ENCODE measurements at regions of chr4 and their contacts with region 1.

Region 1: GRCh38 chr4:83217721-83218522 is 66.7 kb downstream of the COQ2 start:
- DNase-seq: peak; percentile 99
- ATAC-seq: peak; percentile 79
- H3K4me3 ChIP-seq: peak overlapping the region; percentile 17; the same call in 1 of the 2 replicates
- H3K27ac ChIP-seq: peak overlapping the region; percentile 97
- H3K4me1 ChIP-seq: peaks cover 70% of the 10 kb centered on the region
- H3K27me3 ChIP-seq: no peaks in the 10 kb centered on the region
- CTCF ChIP-seq: no peak
- EP300 ChIP-seq: peak; percentile 78 to 88; a peak in 2 of 4 replicates
- POLR2A ChIP-seq: peak; percentile 31; the same call in 1 of the 2 replicates
- RAD21 ChIP-seq: peak; percentile 20; the same call in 1 of the 2 replicates

Region 2: GRCh38 chr4:83054928-83055327 is 163.0 kb before region 1 on chr4:
- CTCF ChIA-PET with region 1: no interaction called
- POLR2A ChIA-PET with region 1: no interaction called
- RAD21 ChIA-PET with region 1: no interaction called
- SMC1A ChIA-PET with region 1: no interaction called
- in situ Hi-C with region 1: no loop called
- intact Hi-C with region 1: no loop called
- DNase-seq: no peak
- ATAC-seq: peak; percentile 67
- H3K4me3 ChIP-seq: no peak overlapping the region
- H3K27ac ChIP-seq: no peak overlapping the region
- H3K4me1 ChIP-seq: no peaks in the 10 kb centered on the region
- H3K27me3 ChIP-seq: no peaks in the 10 kb centered on the region
- CTCF ChIP-seq: peak; percentile 19 to 48 (median 38); a peak in 3 of 6 replicates
- EP300 ChIP-seq: no peak
- POLR2A ChIP-seq: no peak
- RAD21 ChIP-seq: peak; percentile 51

Region 3: GRCh38 chr4:83074086-83074704 is 143.7 kb before region 1 on chr4:
- CTCF ChIA-PET with region 1: interaction called, 14 read pairs
- POLR2A ChIA-PET with region 1: interaction called, 5 read pairs
- RAD21 ChIA-PET with region 1: interaction called, 22 read pairs
- SMC1A ChIA-PET with region 1: interaction called, 13 read pairs
- in situ Hi-C with region 1: no loop called
- intact Hi-C with region 1: loop called (anchors 2 kb)
- DNase-seq: peak; percentile 79
- ATAC-seq: peak; percentile 95
- H3K4me3 ChIP-seq: no peak overlapping the region
- H3K27ac ChIP-seq: peak overlapping the region; percentile 7; the same call in 1 of the 2 replicates
- H3K4me1 ChIP-seq: peaks cover 8% of the 10 kb centered on the region
- H3K27me3 ChIP-seq: no peaks in the 10 kb centered on the region
- CTCF ChIP-seq: peak; percentile 74 to 78 (median 77)
- EP300 ChIP-seq: 0 out of 4 replicates have a peak, but pooled peaks of 1 of the 2 experiments have one; percentile 31
- POLR2A ChIP-seq: no peak
- RAD21 ChIP-seq: peak; percentile 92

Region 4: GRCh38 chr4:83174844-83175414 is 43.0 kb before region 1 on chr4:
- CTCF ChIA-PET with region 1: interaction called, 10 read pairs
- POLR2A ChIA-PET with region 1: interaction called, 19 read pairs
- RAD21 ChIA-PET with region 1: interaction called, 27 read pairs
- SMC1A ChIA-PET with region 1: interaction called, 51 read pairs
- in situ Hi-C with region 1: no loop called
- intact Hi-C with region 1: loop called (anchors 1 kb)
- DNase-seq: peak; percentile 87
- ATAC-seq: peak; percentile 76
- H3K4me3 ChIP-seq: 0 out of 2 replicates have a peak overlapping the region, but pooled peaks have one; percentile 30
- H3K27ac ChIP-seq: peak overlapping the region; percentile 90
- H3K4me1 ChIP-seq: peaks cover 62% of the 10 kb centered on the region
- H3K27me3 ChIP-seq: no peaks in the 10 kb centered on the region
- CTCF ChIP-seq: no peak
- EP300 ChIP-seq: peak; percentile 1 to 47; a peak in 1 of 4 replicates
- POLR2A ChIP-seq: no peak
- RAD21 ChIP-seq: no peak

Region 5: DNA sequence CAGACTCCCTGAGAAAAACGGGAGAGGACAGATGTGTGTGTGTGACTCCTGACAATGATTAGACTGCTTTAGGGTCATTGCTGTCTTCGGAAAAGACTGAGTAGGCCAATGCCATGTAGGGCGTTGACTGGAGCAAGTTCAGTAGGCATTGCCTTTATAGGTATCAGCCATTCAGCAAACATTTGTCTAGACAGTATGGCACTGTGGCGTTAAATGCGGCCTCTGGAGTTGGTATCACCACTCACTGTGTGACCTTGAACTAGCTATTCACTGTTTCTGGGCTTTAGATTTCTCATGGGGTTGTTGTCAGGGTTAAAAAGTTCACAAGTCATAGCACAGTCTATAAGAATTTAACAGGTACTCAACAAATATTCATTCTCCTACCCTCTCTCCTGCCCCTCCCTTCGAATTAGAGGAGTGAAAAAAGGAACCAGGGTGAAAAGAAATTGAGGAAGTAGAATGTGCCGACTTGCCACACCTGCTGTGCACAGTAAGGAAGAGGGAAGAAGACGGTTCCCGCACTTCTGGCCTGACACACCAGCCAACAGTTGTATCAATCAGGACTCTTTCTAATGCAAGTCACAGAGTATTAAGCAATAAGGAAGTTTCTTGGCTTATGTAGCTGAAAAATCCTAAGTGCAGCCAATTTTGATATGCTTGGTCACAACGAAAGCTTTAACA is 20.2 kb before region 1 on chr4:
- CTCF ChIA-PET with region 1: interaction called, 3 read pairs
- POLR2A ChIA-PET with region 1: no interaction called
- RAD21 ChIA-PET with region 1: interaction called, 6 read pairs
- SMC1A ChIA-PET with region 1: interaction called, 10 read pairs
- in situ Hi-C with region 1: no loop called
- intact Hi-C with region 1: no loop called
- DNase-seq: no peak
- ATAC-seq: peak; percentile 82
- H3K4me3 ChIP-seq: no peak overlapping the region
- H3K27ac ChIP-seq: peak overlapping the region; percentile 32; the same call in 1 of the 2 replicates
- H3K4me1 ChIP-seq: peaks cover 10% of the 10 kb centered on the region
- H3K27me3 ChIP-seq: no peaks in the 10 kb centered on the region
- CTCF ChIP-seq: no peak
- EP300 ChIP-seq: no peak
- POLR2A ChIP-seq: no peak
- RAD21 ChIP-seq: no peak

Region 6: DNA sequence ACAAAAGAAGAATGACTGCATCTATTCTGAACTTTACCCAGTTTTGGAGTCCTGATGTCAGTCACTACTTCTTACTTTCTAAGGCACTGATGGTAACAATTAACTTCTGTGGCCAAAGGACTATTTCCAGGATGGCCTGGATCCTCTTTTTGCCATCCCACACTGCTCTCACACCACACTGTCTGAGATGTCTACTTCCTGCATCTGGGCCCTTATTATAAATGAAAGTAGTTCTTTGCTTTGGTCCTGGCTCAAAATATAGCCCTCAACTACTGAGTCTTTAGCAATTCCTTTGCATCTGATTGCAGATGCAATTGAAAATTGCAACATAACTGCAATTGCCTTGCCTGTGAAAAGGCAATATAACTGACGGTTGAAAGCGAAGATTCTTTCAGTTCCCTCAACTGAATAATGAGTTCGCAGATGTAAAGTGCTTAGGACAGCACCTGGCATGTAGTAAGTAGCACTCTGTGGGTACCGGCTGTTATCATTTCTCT is 22.5 kb after region 1 on chr4:
- CTCF ChIA-PET with region 1: interaction called, 18 read pairs
- POLR2A ChIA-PET with region 1: interaction called, 18 read pairs
- RAD21 ChIA-PET with region 1: interaction called, 26 read pairs
- SMC1A ChIA-PET with region 1: interaction called, 152 read pairs
- in situ Hi-C with region 1: no loop called
- intact Hi-C with region 1: loop called (anchors 1 kb)
- DNase-seq: peak; percentile 96
- ATAC-seq: peak; percentile 90
- H3K4me3 ChIP-seq: no peak overlapping the region
- H3K27ac ChIP-seq: peak overlapping the region; percentile 75; the same call in 1 of the 2 replicates
- H3K4me1 ChIP-seq: peaks cover 20% of the 10 kb centered on the region
- H3K27me3 ChIP-seq: no peaks in the 10 kb centered on the region
- CTCF ChIP-seq: no peak
- EP300 ChIP-seq: peak; percentile 76 to 89; a peak in 3 of 4 replicates
- POLR2A ChIP-seq: no peak
- RAD21 ChIP-seq: no peak

Region 7: DNA sequence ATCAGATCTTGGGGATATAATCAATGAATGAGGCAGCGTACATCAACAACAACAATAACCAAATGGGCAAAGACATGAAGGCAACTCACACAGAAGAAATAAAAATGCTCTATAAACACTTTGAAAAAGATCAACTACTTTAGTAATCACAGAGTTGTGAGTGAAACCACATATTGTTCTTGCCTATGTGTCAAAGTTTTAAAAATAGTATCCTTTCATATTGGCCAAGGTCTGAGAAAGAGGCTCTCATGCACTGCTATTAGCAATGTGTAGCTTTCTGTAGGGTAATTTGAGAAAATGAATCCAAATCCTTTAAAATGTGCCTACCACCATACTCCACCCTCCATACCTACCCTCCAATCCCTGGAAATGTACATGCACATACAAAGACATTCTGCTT is 41.7 kb after region 1 on chr4:
- CTCF ChIA-PET with region 1: interaction called, 34 read pairs
- POLR2A ChIA-PET with region 1: interaction called, 13 read pairs
- RAD21 ChIA-PET with region 1: interaction called, 64 read pairs
- SMC1A ChIA-PET with region 1: interaction called, 145 read pairs
- in situ Hi-C with region 1: no loop called
- intact Hi-C with region 1: loop called (anchors 1 kb)
- DNase-seq: no peak
- ATAC-seq: peak; percentile 69
- H3K4me3 ChIP-seq: no peak overlapping the region
- H3K27ac ChIP-seq: peak overlapping the region; percentile 28
- H3K4me1 ChIP-seq: peaks cover 32% of the 10 kb centered on the region
- H3K27me3 ChIP-seq: no peaks in the 10 kb centered on the region
- CTCF ChIP-seq: no peak
- EP300 ChIP-seq: no peak
- POLR2A ChIP-seq: no peak
- RAD21 ChIP-seq: no peak

Region 8: DNA sequence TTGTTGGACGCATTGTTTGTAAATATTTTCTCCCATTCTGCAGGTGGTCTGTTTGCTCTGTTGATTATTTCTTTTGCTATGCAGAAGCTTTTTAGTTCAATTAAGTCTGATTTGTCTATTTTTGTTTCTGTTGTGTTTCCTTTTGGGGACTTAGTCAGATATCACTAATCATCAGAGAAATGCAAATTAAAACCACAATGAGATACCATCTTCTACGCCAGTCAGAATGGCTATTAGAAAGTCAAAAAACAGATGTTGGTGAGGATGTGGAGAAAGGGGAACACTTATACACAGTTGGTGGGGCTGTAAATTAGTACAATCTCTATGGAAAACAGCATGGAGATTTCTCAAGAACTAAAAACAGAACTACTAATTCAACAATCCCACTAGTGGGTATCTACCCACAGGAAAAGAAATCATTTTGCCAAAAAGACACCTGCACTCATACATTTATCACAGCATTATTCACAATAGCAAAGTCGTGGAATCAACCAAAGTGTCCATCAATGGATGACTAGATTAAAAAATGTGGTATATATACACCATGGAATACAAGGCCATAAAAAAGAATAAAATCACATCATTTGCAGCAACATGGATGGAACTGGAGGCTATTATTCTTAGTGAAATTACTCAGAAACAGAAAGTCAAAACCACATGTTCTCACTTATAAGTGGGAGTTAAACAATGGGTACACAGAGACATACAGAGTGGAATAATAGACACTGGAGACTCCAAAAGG is 58.5 kb after region 1 on chr4:
- CTCF ChIA-PET with region 1: interaction called, 25 read pairs
- POLR2A ChIA-PET with region 1: interaction called, 7 read pairs
- RAD21 ChIA-PET with region 1: interaction called, 27 read pairs
- SMC1A ChIA-PET with region 1: interaction called, 28 read pairs
- in situ Hi-C with region 1: no loop called
- intact Hi-C with region 1: loop called (anchors 1 kb)
- DNase-seq: no peak
- ATAC-seq: peak; percentile 70
- H3K4me3 ChIP-seq: peak overlapping the region; percentile 26; the same call in 1 of the 2 replicates
- H3K27ac ChIP-seq: peak overlapping the region; percentile 78
- H3K4me1 ChIP-seq: peaks cover 44% of the 10 kb centered on the region
- H3K27me3 ChIP-seq: no peaks in the 10 kb centered on the region
- CTCF ChIP-seq: no peak
- EP300 ChIP-seq: peak in 1 of 2 experiments; percentile 70; a peak in 1 of 4 replicates
- POLR2A ChIP-seq: no peak
- RAD21 ChIP-seq: no peak

Region 9: GRCh38 chr4:83548151-83548905 is 330.4 kb after region 1 on chr4:
- CTCF ChIA-PET with region 1: no interaction called
- POLR2A ChIA-PET with region 1: no interaction called
- RAD21 ChIA-PET with region 1: no interaction called
- SMC1A ChIA-PET with region 1: no interaction called
- in situ Hi-C with region 1: no loop called
- intact Hi-C with region 1: no loop called
- DNase-seq: peak; percentile 83
- ATAC-seq: peak; percentile 92
- H3K4me3 ChIP-seq: no peak overlapping the region
- H3K27ac ChIP-seq: peak overlapping the region; percentile 39; the same call in 1 of the 2 replicates
- H3K4me1 ChIP-seq: peaks cover 15% of the 10 kb centered on the region
- H3K27me3 ChIP-seq: no peaks in the 10 kb centered on the region
- CTCF ChIP-seq: no peak
- EP300 ChIP-seq: peak; percentile 55 to 84; a peak in 3 of 4 replicates
- POLR2A ChIP-seq: no peak
- RAD21 ChIP-seq: no peak

Measured in GM12878 (cell line).